ENCODE measurements at regions of chr12 and their contacts with region 1.

Region 1: GRCh38 chr12:9064201-9064814 is 51.4 kb downstream of the A2M start:
- DNase-seq: peak; percentile 71
- H3K4me3 Mint-ChIP-seq: peak overlapping the region; percentile 79
- H3K27ac Mint-ChIP-seq: peak overlapping the region; percentile 79
- H3K4me1 Mint-ChIP-seq: peaks cover 13% of the 10 kb centered on the region
- H3K27me3 Mint-ChIP-seq: no peaks in the 10 kb centered on the region
- CTCF ChIP-seq: peak; percentile 38

Region 2: DNA sequence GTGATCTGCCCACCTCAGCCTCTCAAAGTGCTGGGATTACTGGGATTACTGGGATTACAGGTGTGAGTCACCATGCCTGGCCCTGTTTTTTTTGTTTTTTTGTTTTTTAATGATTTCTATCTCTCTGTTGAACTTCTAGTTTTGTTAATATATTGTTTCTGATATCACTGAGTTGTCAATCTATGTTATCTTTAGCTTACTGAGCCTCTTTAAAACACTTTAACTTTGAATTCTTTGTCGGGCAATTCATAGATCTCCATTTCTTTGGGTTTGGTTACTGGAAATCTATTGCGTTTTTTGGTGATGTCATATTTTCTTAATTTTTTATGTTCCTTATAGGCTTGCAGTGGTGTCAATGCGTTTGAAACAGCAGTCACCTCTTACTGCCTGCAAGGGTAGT is 84.2 kb before region 1 on chr12:
- CTCF ChIA-PET with region 1: no interaction called
- POLR2A ChIA-PET with region 1: no interaction called
- intact Hi-C with region 1: no loop called
- DNase-seq: no peak
- H3K4me3 Mint-ChIP-seq: no peak overlapping the region
- H3K27ac Mint-ChIP-seq: no peak overlapping the region
- H3K4me1 Mint-ChIP-seq: no peaks in the 10 kb centered on the region
- H3K27me3 Mint-ChIP-seq: no peaks in the 10 kb centered on the region
- CTCF ChIP-seq: no peak

Region 3: DNA sequence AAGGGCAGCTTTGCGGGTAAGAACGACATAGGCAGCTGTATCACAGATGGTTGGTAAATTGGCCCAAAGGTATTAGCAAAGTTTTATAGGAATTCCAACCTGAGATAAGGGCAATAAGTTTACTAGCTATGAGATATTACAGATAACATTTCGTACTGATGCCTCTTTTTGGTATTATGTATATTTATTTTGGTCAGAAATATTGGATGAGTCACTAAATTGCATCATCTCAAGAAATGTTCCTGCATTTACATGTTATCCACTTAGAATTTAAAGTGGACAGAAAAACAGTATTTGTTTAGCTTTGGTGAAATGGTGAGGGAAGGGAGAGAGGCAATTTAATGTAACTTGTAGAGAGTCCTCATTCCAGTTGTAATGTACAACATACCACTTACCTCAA is 209.0 kb after region 1 on chr12:
- CTCF ChIA-PET with region 1: interaction called, 5 read pairs
- POLR2A ChIA-PET with region 1: interaction called, 17 read pairs
- intact Hi-C with region 1: no loop called
- DNase-seq: peak; percentile 51
- H3K4me3 Mint-ChIP-seq: peak overlapping the region; percentile 4
- H3K27ac Mint-ChIP-seq: peak overlapping the region; percentile 97
- H3K4me1 Mint-ChIP-seq: peaks cover 36% of the 10 kb centered on the region
- H3K27me3 Mint-ChIP-seq: no peaks in the 10 kb centered on the region
- CTCF ChIP-seq: no peak

Region 4: GRCh38 chr12:9372202-9372601 is 307.9 kb after region 1 on chr12:
- CTCF ChIA-PET with region 1: interaction called, 9 read pairs
- POLR2A ChIA-PET with region 1: interaction called, 4 read pairs
- intact Hi-C with region 1: loop called (anchors 5 kb)
- DNase-seq: peak; percentile 33
- H3K4me3 Mint-ChIP-seq: no peak overlapping the region
- H3K27ac Mint-ChIP-seq: no peak overlapping the region
- H3K4me1 Mint-ChIP-seq: no peaks in the 10 kb centered on the region
- H3K27me3 Mint-ChIP-seq: no peaks in the 10 kb centered on the region
- CTCF ChIP-seq: no peak

Measured in MCF 10A (cell line).